Caco-2 (cell line): ENCODE measurements at regions of chr12 and their contacts with region 1.

Region 1: GRCh38 chr12:78470354-78471195 is 394.0 kb upstream of the SYT1 start:
- DNase-seq: peak; percentile 48 to 50
- H3K4me3 ChIP-seq: no peak overlapping the region
- H3K4me3 Mint-ChIP-seq: no peak overlapping the region
- H3K27ac Mint-ChIP-seq: no peak overlapping the region
- H3K4me1 ChIP-seq: no peaks in the 10 kb centered on the region
- H3K4me1 Mint-ChIP-seq: no peaks in the 10 kb centered on the region
- H3K27me3 ChIP-seq: no peaks in the 10 kb centered on the region
- H3K27me3 Mint-ChIP-seq: peaks cover 6% of the 10 kb centered on the region
- CTCF ChIP-seq: peak; percentile 65 to 74

Region 2: GRCh38 chr12:78457938-78458337 is 12.6 kb before region 1 on chr12:
- CTCF ChIA-PET with region 1: no interaction called
- POLR2A ChIA-PET with region 1: no interaction called
- intact Hi-C with region 1: no loop called
- DNase-seq: no peak
- H3K4me3 ChIP-seq: no peak overlapping the region
- H3K4me3 Mint-ChIP-seq: no peak overlapping the region
- H3K27ac Mint-ChIP-seq: no peak overlapping the region
- H3K4me1 ChIP-seq: no peaks in the 10 kb centered on the region
- H3K4me1 Mint-ChIP-seq: no peaks in the 10 kb centered on the region
- H3K27me3 ChIP-seq: no peaks in the 10 kb centered on the region
- H3K27me3 Mint-ChIP-seq: no peaks in the 10 kb centered on the region
- CTCF ChIP-seq: no peak

Region 3: DNA sequence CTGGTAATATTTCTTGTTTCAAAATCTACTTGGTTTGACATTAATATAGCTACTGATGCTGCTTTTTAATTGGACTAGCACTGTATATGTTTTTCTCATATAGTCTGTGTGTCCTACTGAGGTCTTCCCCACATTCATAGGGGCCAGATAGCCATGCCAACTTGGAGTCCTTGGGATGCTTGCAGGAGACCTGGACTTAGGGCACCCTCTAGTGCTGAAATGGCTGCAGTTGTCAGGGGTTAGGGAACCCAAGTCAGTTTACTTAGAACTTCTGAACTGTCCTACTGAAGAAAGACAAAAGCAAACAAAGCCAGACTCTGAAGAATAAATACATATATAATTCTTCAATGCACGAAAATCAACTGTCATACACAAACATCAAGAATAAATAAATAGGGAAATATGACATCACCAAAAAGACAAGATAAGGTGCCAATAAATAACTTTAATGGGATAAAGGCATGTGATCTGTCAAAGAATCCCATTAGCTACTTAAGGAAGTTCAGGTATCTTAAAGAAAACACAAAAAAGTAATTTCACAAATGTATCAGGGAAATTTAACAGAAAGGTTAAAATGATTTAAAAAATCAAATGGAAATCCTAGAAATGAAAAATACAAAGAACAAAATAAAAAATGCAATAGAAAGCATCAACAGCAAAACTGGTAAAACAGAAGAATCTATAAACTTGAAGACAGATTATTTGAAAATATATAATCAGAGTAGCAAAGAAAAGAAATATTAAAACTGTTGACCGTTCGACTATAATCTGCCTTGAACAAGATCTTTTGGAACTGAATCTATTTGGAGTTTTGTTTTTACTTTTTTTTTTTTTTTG is 114.3 kb after region 1 on chr12:
- CTCF ChIA-PET with region 1: interaction called, 3 read pairs
- POLR2A ChIA-PET with region 1: no interaction called
- intact Hi-C with region 1: loop called (anchors 1 kb)
- DNase-seq: peak in 1 of 2 experiments; percentile 28
- H3K4me3 ChIP-seq: no peak overlapping the region
- H3K4me3 Mint-ChIP-seq: no peak overlapping the region
- H3K27ac Mint-ChIP-seq: no peak overlapping the region
- H3K4me1 ChIP-seq: no peaks in the 10 kb centered on the region
- H3K4me1 Mint-ChIP-seq: no peaks in the 10 kb centered on the region
- H3K27me3 ChIP-seq: no peaks in the 10 kb centered on the region
- H3K27me3 Mint-ChIP-seq: no peaks in the 10 kb centered on the region
- CTCF ChIP-seq: peak; percentile 24

Region 4: DNA sequence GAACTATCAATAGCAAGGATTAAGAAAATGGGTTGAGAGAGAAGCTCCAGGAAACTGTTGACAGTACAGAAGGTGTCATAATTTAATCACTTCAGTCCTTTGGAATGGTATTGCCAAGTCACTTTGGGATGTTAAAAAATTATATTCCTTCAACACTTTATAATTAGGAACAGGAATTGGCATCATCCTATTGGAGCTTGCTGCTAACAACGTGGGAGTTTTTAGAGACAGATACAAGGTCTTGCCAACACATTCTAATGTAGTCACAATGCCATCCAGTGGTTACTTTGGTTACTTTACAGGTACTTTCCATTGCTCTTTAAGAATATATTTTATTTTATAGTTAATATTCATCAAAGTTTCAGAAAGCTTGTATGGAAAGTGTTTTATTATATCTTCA is 704.1 kb after region 1 on chr12:
- CTCF ChIA-PET with region 1: no interaction called
- POLR2A ChIA-PET with region 1: no interaction called
- intact Hi-C with region 1: loop called (anchors 1 kb)
- DNase-seq: peak in 1 of 2 experiments; percentile 7
- H3K4me3 ChIP-seq: no peak overlapping the region
- H3K4me3 Mint-ChIP-seq: no peak overlapping the region
- H3K27ac Mint-ChIP-seq: no peak overlapping the region
- H3K4me1 ChIP-seq: no peaks in the 10 kb centered on the region
- H3K4me1 Mint-ChIP-seq: no peaks in the 10 kb centered on the region
- H3K27me3 ChIP-seq: no peaks in the 10 kb centered on the region
- H3K27me3 Mint-ChIP-seq: no peaks in the 10 kb centered on the region
- CTCF ChIP-seq: peak in 1 of 2 experiments; percentile 14